ENCODE measurements at regions of chr4 and their contacts with region 1.

Region 1: GRCh38 chr4:42519803-42520417 is 122.6 kb downstream of the SHISA3 start:
- DNase-seq: peak; percentile 19 to 59 (median 36)
- ATAC-seq: peak; percentile 85
- H3K4me3 ChIP-seq: no peak overlapping the region
- H3K27ac ChIP-seq: no peak overlapping the region
- H3K4me1 ChIP-seq: no peaks in the 10 kb centered on the region
- H3K27me3 ChIP-seq: no peaks in the 10 kb centered on the region
- CTCF ChIP-seq: peak; percentile 26 to 62 (median 48); a peak in 4 of 6 replicates
- EP300 ChIP-seq: no peak
- POLR2A ChIP-seq: no peak
- RAD21 ChIP-seq: peak; percentile 61 to 78

Region 2: GRCh38 chr4:41281038-41281634 is 1238.8 kb before region 1 on chr4:
- CTCF ChIA-PET with region 1: no interaction called
- POLR2A ChIA-PET with region 1: no interaction called
- in situ Hi-C with region 1: no loop called
- intact Hi-C with region 1: loop called (anchors 5 kb)
- DNase-seq: peak; percentile 65 to 74 (median 70)
- ATAC-seq: peak; percentile 97
- H3K4me3 ChIP-seq: no peak overlapping the region
- H3K27ac ChIP-seq: no peak overlapping the region
- H3K4me1 ChIP-seq: no peaks in the 10 kb centered on the region
- H3K27me3 ChIP-seq: no peaks in the 10 kb centered on the region
- CTCF ChIP-seq: peak; percentile 73 to 92 (median 79)
- EP300 ChIP-seq: no peak
- POLR2A ChIP-seq: no peak
- RAD21 ChIP-seq: peak; percentile 91 to 93

Region 3: DNA sequence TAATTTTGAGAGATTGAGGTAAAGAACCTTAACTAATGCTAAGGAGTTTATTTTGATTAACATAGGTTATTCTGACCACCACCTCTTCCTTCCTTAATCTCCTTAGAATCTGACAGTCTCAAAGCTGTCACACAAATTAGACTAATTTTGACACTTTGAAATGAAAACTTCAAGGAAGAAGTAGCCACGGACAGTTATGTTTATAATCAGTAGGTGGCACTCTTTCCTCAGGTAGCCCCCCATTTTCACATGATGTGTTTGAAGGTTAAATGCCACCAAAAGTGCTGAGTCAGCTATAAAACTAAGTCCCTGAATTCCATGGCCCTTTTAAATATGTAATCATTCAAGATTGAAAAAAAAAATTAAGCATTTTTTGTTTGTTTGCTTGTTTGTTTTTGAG is 562.3 kb before region 1 on chr4:
- CTCF ChIA-PET with region 1: no interaction called
- POLR2A ChIA-PET with region 1: no interaction called
- in situ Hi-C with region 1: loop called (anchors 25 kb)
- intact Hi-C with region 1: loop called (anchors 10 kb)
- DNase-seq: peak; percentile 38 to 63 (median 56)
- ATAC-seq: peak; percentile 86
- H3K4me3 ChIP-seq: no peak overlapping the region
- H3K27ac ChIP-seq: no peak overlapping the region
- H3K4me1 ChIP-seq: no peaks in the 10 kb centered on the region
- H3K27me3 ChIP-seq: no peaks in the 10 kb centered on the region
- CTCF ChIP-seq: peak; percentile 58 to 81 (median 62)
- EP300 ChIP-seq: no peak; the same call in 1 of the 2 replicates
- POLR2A ChIP-seq: no peak
- RAD21 ChIP-seq: peak; percentile 57 to 69

Region 4: GRCh38 chr4:41963105-41963504 is 556.8 kb before region 1 on chr4:
- CTCF ChIA-PET with region 1: no interaction called
- POLR2A ChIA-PET with region 1: no interaction called
- in situ Hi-C with region 1: loop called (anchors 25 kb)
- intact Hi-C with region 1: loop called (anchors 10 kb)
- DNase-seq: peak in 1 of 4 experiments; percentile 19
- ATAC-seq: no peak
- H3K4me3 ChIP-seq: no peak overlapping the region
- H3K27ac ChIP-seq: no peak overlapping the region
- H3K4me1 ChIP-seq: no peaks in the 10 kb centered on the region
- H3K27me3 ChIP-seq: no peaks in the 10 kb centered on the region
- CTCF ChIP-seq: peak in 1 of 3 experiments; percentile 34; a peak in 2 of 6 replicates
- EP300 ChIP-seq: no peak
- POLR2A ChIP-seq: no peak
- RAD21 ChIP-seq: no peak

Region 5: DNA sequence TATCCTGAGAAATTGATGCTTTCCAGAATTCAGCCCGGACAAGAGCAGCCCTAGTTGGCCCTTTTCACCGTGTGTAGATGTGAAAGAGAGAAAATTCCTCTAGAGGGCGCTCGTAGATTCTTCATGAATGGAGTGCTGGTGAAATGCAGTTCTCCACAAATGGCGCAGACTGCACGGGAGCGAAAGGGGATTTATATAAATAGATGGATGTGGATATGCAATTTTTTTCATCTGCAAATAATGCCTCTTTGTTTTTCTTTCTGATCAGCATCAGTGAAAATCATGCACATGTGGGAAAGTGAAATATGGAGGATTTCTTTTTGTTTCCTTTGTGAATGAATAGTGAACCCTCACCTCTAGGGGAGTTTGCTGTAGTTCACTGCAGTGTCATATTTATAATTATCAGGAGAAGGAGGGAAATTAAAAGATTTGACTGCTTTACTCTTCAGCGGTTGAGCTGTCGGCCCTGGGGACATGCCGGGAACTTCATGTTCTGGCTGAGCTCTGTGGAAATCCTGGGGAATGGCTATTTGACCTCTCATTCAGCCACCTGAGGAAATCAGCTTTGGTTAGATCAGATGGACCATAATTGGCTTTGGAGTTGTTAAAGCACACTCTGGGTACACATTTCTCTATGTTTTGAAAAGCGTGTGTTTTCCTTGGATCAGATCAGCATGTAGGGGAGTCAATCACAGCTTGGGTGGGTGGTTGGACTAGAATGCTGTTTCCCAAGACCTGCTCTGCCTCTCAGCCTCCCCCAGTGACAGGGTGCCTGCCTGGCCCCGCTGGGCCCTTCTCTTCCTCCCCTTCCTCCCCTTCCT is 237.6 kb before region 1 on chr4:
- CTCF ChIA-PET with region 1: interaction called, 5 read pairs
- POLR2A ChIA-PET with region 1: no interaction called
- in situ Hi-C with region 1: loop called (anchors 5 kb)
- intact Hi-C with region 1: loop called (anchors 1 kb)
- DNase-seq: peak; percentile 59 to 69 (median 62)
- ATAC-seq: peak; percentile 95
- H3K4me3 ChIP-seq: no peak overlapping the region
- H3K27ac ChIP-seq: no peak overlapping the region
- H3K4me1 ChIP-seq: no peaks in the 10 kb centered on the region
- H3K27me3 ChIP-seq: no peaks in the 10 kb centered on the region
- CTCF ChIP-seq: peak; percentile 65 to 79 (median 76)
- EP300 ChIP-seq: no peak
- POLR2A ChIP-seq: no peak
- RAD21 ChIP-seq: peak; percentile 57 to 70

Region 6: DNA sequence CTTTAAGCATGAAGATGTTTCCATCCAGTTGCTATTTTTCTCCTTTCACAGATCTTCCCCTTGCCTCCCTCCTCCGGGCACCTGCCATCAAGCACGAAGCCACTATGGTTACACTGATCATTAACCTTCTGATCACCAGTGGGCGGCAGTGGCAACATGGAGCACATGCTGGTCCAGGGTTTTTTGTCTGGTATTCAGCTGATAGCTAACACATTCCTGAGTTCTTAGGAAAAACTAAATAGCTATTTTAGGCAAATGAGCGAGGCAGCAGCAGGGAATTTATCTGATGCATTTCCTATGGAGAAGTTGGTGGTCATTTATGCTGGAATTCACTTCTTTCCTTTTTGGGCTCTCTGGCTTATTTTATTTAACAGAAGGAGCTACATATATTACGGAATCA is 99.8 kb before region 1 on chr4:
- CTCF ChIA-PET with region 1: no interaction called
- POLR2A ChIA-PET with region 1: no interaction called
- in situ Hi-C with region 1: no loop called
- intact Hi-C with region 1: no loop called
- DNase-seq: no peak
- ATAC-seq: no peak
- H3K4me3 ChIP-seq: no peak overlapping the region
- H3K27ac ChIP-seq: no peak overlapping the region
- H3K4me1 ChIP-seq: no peaks in the 10 kb centered on the region
- H3K27me3 ChIP-seq: no peaks in the 10 kb centered on the region
- CTCF ChIP-seq: no peak
- EP300 ChIP-seq: no peak
- POLR2A ChIP-seq: no peak
- RAD21 ChIP-seq: no peak

Region 7: GRCh38 chr4:42488114-42488513 is 31.8 kb before region 1 on chr4:
- CTCF ChIA-PET with region 1: no interaction called
- POLR2A ChIA-PET with region 1: no interaction called
- in situ Hi-C with region 1: no loop called
- intact Hi-C with region 1: no loop called
- DNase-seq: no peak
- ATAC-seq: no peak
- H3K4me3 ChIP-seq: no peak overlapping the region
- H3K27ac ChIP-seq: no peak overlapping the region
- H3K4me1 ChIP-seq: no peaks in the 10 kb centered on the region
- H3K27me3 ChIP-seq: peaks cover 0 to 2% of the 10 kb centered on the region in 2 experiments; a peak in 1 of 5 replicates
- CTCF ChIP-seq: no peak
- EP300 ChIP-seq: no peak
- POLR2A ChIP-seq: no peak
- RAD21 ChIP-seq: no peak

Measured in K562 (cell line).